Caco-2 (cell line): ENCODE measurements at regions of chr20 and their contacts with region 1.

Region 1: GRCh38 chr20:13870170-13870748 is 85.4 kb downstream of the NDUFAF5 start:
- DNase-seq: no peak
- H3K4me3 ChIP-seq: no peak overlapping the region
- H3K4me3 Mint-ChIP-seq: no peak overlapping the region
- H3K27ac Mint-ChIP-seq: no peak overlapping the region
- H3K4me1 ChIP-seq: no peaks in the 10 kb centered on the region
- H3K4me1 Mint-ChIP-seq: peaks cover 6% of the 10 kb centered on the region
- H3K27me3 ChIP-seq: no peaks in the 10 kb centered on the region
- H3K27me3 Mint-ChIP-seq: peaks cover 12% of the 10 kb centered on the region
- CTCF ChIP-seq: no peak

Region 2: DNA sequence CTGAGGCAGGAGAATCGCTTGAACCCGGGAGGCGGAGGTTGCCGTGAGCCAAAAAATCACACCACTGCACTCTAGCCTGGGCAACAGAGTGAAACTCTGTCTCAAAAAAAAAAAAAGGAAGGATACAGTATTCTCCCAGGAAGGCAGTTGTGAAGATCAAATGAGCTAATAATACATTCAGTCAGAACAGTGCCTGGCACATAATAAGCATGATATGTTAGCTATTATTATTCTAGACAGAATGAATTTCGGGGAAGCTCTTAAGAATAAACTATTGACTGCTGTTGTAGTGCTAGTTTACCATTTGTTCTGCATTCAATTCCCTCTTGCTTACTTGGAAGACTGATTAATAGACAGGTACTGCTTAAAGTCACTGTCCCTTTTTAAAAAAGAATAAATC is 44.8 kb before region 1 on chr20:
- CTCF ChIA-PET with region 1: no interaction called
- POLR2A ChIA-PET with region 1: no interaction called
- intact Hi-C with region 1: loop called (anchors 1 kb)
- DNase-seq: no peak
- H3K4me3 ChIP-seq: no peak overlapping the region
- H3K4me3 Mint-ChIP-seq: no peak overlapping the region
- H3K27ac Mint-ChIP-seq: no peak overlapping the region
- H3K4me1 ChIP-seq: no peaks in the 10 kb centered on the region
- H3K4me1 Mint-ChIP-seq: no peaks in the 10 kb centered on the region
- H3K27me3 ChIP-seq: no peaks in the 10 kb centered on the region; the same call in 1 of the 2 replicates
- H3K27me3 Mint-ChIP-seq: peaks cover 6% of the 10 kb centered on the region
- CTCF ChIP-seq: no peak

Region 3: DNA sequence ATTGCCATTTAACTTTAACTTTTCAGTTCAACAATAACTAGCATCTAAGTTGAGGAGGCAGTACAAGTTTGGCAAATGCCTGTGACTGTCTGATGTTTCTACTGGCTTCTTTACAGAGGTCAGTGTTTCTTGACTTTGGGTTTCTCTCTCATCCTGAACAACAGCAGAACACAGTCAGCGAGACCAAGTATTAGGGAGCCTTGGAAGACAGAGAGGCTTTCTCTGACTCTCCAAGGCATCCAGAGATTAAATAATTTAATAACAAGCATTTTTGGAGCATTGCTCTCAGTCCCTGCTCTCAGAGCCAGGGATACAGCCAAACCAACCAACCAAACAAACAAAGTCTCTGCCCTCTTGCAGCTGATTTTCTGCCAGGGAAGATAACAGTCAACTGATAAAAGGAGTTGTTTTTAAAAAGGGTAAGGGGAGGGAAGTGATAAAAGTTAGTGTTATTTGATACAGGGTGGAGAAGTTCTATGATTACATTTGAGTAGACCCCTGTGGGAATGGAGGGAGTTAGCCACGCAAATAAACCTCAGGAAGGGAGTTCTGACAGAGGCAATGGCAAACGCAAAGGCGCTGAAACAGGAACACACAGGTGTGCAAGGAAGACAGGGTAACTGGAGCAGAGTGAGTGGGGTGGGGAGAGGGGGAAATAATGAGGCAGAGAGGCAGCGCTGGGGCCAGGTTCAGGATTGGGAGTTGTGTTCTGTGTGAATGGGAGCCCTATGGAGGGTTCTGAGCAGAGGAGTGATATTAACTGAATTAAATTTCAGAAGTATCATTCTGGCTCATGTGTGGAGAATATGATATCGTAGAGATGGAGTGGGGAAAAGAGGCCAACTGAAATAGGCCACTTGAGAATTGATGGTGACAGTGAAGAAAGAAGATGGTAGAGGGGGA is 65.0 kb after region 1 on chr20:
- CTCF ChIA-PET with region 1: no interaction called
- POLR2A ChIA-PET with region 1: no interaction called
- intact Hi-C with region 1: no loop called
- DNase-seq: no peak
- H3K4me3 ChIP-seq: no peak overlapping the region
- H3K4me3 Mint-ChIP-seq: no peak overlapping the region
- H3K27ac Mint-ChIP-seq: no peak overlapping the region
- H3K4me1 ChIP-seq: no peaks in the 10 kb centered on the region
- H3K4me1 Mint-ChIP-seq: no peaks in the 10 kb centered on the region
- H3K27me3 ChIP-seq: no peaks in the 10 kb centered on the region
- H3K27me3 Mint-ChIP-seq: peaks cover 4% of the 10 kb centered on the region
- CTCF ChIP-seq: no peak